WTC11 (cell line): ENCODE measurements at regions of chr10 and their contacts with region 1.

Region 1: DNA sequence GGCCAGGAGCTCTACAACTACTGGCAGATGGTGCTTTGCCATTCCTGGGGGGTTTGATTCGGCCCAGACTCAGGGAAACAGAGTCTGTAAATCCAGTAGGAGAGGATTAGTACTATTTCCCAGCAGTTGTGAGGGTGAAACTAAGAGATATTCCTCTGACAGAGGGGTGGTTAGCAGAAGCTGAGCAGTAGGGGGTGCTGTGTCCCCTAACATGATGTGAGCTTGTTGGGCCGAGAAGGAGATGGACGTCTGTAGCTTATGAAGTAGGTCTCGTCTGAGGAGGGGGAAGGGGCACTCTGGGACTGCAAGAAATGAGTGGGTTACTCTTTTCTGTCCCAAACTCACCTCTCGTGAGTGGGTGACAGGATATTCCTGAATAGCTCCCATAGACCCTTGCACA is 179.2 kb upstream of the MBL2 start:
- DNase-seq: peak; percentile 89
- ATAC-seq: peak; percentile 87
- H3K4me3 Mint-ChIP-seq: no peak overlapping the region
- H3K27ac Mint-ChIP-seq: 0 out of 2 replicates have a peak overlapping the region, but pooled peaks have one; percentile 33
- H3K4me1 Mint-ChIP-seq: peaks cover 23% of the 10 kb centered on the region
- H3K27me3 Mint-ChIP-seq: peaks cover 2% of the 10 kb centered on the region; the same call in 1 of the 2 replicates
- CTCF ChIP-seq: peak; percentile 59

Region 2: DNA sequence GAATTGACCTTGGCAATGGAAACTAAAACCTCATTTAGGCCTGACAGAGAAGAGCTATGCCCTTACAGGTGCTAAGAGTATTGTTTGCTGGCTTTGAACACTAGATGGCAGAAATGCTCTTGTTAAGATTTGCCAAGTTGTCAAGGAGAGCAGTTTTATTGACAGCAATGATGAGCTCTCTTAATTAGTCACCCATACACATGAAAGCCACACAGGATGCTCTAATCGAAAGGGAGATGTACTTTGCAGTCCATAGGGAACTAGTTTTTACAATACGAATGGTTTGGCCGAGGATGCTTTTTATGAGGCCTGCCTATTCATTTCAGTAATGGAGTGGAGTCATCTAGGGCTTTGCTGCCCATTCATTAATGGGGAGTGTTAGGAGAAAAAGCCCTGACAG is 133.8 kb before region 1 on chr10:
- CTCF ChIA-PET with region 1: interaction called, 18 read pairs
- POLR2A ChIA-PET with region 1: no interaction called
- DNase-seq: no peak
- ATAC-seq: peak; percentile 95
- H3K4me3 Mint-ChIP-seq: no peak overlapping the region
- H3K27ac Mint-ChIP-seq: peak overlapping the region; percentile 70
- H3K4me1 Mint-ChIP-seq: peaks cover 48% of the 10 kb centered on the region
- H3K27me3 Mint-ChIP-seq: no peaks in the 10 kb centered on the region
- CTCF ChIP-seq: peak; percentile 36; the same call in 1 of the 2 replicates

Region 3: GRCh38 chr10:52853704-52854103 is 98.1 kb before region 1 on chr10:
- CTCF ChIA-PET with region 1: no interaction called
- POLR2A ChIA-PET with region 1: no interaction called
- DNase-seq: no peak
- ATAC-seq: no peak
- H3K4me3 Mint-ChIP-seq: no peak overlapping the region
- H3K27ac Mint-ChIP-seq: no peak overlapping the region
- H3K4me1 Mint-ChIP-seq: peaks cover 17% of the 10 kb centered on the region
- H3K27me3 Mint-ChIP-seq: no peaks in the 10 kb centered on the region
- CTCF ChIP-seq: no peak

Region 4: DNA sequence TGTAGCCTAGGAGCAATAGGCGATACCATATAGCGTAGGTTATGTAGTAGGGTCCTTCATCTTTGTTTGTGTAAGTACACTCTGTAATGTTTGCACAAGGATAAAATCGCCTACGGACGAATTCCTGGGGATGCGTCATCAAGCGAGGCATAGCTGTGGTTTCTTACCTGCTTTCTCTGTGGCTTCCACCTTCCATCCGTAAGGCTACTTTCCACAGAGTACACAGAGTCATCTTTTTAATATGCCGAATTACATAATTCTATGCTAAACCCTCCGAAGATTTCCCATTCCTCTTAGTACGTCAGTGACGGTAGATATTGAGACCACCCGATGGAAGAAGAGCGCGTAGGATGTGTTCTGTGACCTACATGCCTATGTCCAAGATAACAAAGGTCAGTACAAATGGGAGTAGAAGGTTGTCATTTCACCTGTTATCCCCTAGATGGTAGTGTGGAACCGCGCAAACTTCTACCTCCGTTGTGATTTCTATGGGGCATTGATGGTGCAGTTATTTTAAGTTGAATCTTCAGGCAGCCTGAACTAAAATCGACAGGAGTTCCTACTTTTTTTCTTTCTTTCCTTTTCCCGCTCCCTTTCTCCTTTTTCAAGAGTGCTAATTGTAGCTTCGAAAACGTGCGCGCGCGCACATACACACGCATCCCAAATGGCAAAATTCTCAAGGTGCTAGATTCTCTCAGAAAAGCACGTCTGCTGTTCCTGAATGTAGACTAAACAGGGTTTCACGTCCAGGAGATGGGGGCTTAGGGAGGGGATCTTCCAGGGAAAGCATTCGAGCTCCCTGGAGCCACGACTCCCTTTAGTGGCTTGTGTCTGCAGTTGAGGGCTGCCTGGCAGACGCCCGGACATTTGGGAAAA is 67.6 kb before region 1 on chr10:
- CTCF ChIA-PET with region 1: interaction called, 36 read pairs
- POLR2A ChIA-PET with region 1: no interaction called
- DNase-seq: peak; percentile 57
- ATAC-seq: peak; percentile 97
- H3K4me3 Mint-ChIP-seq: peak overlapping the region; percentile 24
- H3K27ac Mint-ChIP-seq: peak overlapping the region; percentile 96
- H3K4me1 Mint-ChIP-seq: peaks cover 43% of the 10 kb centered on the region
- H3K27me3 Mint-ChIP-seq: no peaks in the 10 kb centered on the region
- CTCF ChIP-seq: peak; percentile 76

Region 5: GRCh38 chr10:52923520-52923919 is 28.3 kb before region 1 on chr10:
- CTCF ChIA-PET with region 1: interaction called, 15 read pairs
- POLR2A ChIA-PET with region 1: no interaction called
- DNase-seq: no peak
- ATAC-seq: peak; percentile 98
- H3K4me3 Mint-ChIP-seq: no peak overlapping the region
- H3K27ac Mint-ChIP-seq: peak overlapping the region; percentile 92
- H3K4me1 Mint-ChIP-seq: peaks cover 42% of the 10 kb centered on the region
- H3K27me3 Mint-ChIP-seq: no peaks in the 10 kb centered on the region; the same call in 1 of the 2 replicates
- CTCF ChIP-seq: no peak

Region 6: GRCh38 chr10:52933748-52934147 is 18.1 kb before region 1 on chr10:
- CTCF ChIA-PET with region 1: no interaction called
- POLR2A ChIA-PET with region 1: no interaction called
- DNase-seq: no peak
- ATAC-seq: no peak
- H3K4me3 Mint-ChIP-seq: no peak overlapping the region
- H3K27ac Mint-ChIP-seq: no peak overlapping the region
- H3K4me1 Mint-ChIP-seq: peaks cover 6% of the 10 kb centered on the region; the same call in 1 of the 2 replicates
- H3K27me3 Mint-ChIP-seq: no peaks in the 10 kb centered on the region
- CTCF ChIP-seq: no peak

Region 7: GRCh38 chr10:53209944-53210611 is 258.3 kb after region 1 on chr10:
- CTCF ChIA-PET with region 1: interaction called, 32 read pairs
- POLR2A ChIA-PET with region 1: no interaction called
- DNase-seq: no peak
- ATAC-seq: peak; percentile 98
- H3K4me3 Mint-ChIP-seq: no peak overlapping the region
- H3K27ac Mint-ChIP-seq: peak overlapping the region; percentile 88
- H3K4me1 Mint-ChIP-seq: peaks cover 35% of the 10 kb centered on the region
- H3K27me3 Mint-ChIP-seq: peaks cover 4% of the 10 kb centered on the region; the same call in 1 of the 2 replicates
- CTCF ChIP-seq: peak; percentile 34; the same call in 1 of the 2 replicates

Region 8: DNA sequence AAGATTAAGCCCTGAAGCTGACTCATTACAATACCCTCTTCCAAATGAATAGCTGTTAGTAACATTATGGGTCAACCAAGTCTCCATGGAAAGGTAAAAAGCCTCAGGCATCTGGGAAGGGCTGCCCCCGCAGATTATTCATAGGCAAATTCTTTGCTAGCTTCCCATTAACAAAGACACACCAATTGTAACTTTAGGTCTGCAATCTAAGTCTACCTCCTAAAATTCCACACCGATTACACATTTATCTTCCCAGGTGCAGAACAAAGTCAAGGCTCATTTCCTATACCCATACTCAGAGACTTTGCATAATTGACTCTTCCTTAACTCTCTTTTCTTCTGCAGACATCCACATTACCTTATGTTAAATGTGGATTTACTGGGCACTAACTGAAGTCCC is 647.1 kb after region 1 on chr10:
- CTCF ChIA-PET with region 1: interaction called, 14 read pairs
- POLR2A ChIA-PET with region 1: no interaction called
- DNase-seq: peak; percentile 40
- ATAC-seq: peak; percentile 70
- H3K4me3 Mint-ChIP-seq: no peak overlapping the region
- H3K27ac Mint-ChIP-seq: peak overlapping the region; percentile 100
- H3K4me1 Mint-ChIP-seq: peaks cover 51% of the 10 kb centered on the region
- H3K27me3 Mint-ChIP-seq: no peaks in the 10 kb centered on the region
- CTCF ChIP-seq: no peak